Posterior vena cava (tissue), 2 donors: ENCODE measurements at regions of chr14 and their contacts with region 1.

Region 1: GRCh38 chr14:91580876-91581577 is 70.9 kb upstream of the PPP4R3A start:
- DNase-seq: no peak

Region 2: GRCh38 chr14:91536327-91536726 is 44.7 kb before region 1 on chr14:
- intact Hi-C with region 1: no loop called
- DNase-seq: no peak

Region 3: GRCh38 chr14:93120517-93120916 is 1539.5 kb after region 1 on chr14:
- intact Hi-C with region 1: loop called in 1 of 2 experiments (anchors 5 kb)
- DNase-seq: no peak